CD8-positive, alpha-beta memory T cell (primary cell): ENCODE measurements at regions of chr11 and their contacts with region 1.

Region 1: DNA sequence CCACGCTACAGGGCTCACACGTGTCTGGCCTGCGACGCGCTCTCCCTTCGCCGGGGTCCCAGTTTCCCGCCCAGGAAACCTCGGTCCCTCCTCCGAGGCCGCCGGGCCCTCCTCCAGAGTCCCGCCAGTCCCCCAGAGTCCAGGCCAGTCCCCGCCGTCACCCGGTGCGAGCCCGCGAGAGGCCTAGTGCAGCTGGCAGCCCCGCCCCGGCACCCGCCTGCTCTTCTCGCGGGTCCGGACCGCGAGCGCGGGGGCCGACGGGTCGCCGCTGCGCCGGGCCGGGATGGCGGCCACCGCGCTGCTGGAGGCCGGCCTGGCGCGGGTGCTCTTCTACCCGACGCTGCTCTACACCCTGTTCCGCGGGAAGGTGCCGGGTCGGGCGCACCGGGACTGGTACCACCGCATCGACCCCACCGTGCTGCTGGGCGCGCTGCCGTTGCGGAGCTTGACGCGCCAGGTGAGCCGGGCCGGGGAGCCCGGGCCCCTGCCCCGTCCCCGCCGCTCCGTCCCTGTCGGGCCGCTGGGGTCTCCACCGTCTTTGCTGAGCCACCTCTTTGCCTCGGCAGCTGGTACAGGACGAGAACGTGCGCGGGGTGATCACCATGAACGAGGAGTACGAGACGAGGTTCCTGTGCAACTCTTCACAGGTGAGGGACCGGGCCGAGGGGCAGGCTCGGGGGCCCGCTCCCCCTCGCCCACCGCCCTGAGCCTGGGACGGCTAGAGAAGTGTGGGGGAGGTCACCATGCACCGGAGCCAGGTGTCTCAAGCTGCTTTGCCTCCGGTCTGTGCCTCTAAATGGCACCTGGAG is at the start of gene PTPMT1:
- DNase-seq: peak; percentile 47 to 75 (median 57)
- H3K4me3 ChIP-seq: peak within 1 kb of the TSS; percentile 80
- H3K4me3 Mint-ChIP-seq: peak within 1 kb of the TSS; percentile 81 to 91 (median 82)
- H3K27ac ChIP-seq: peak within 1 kb of the TSS; percentile 72
- H3K27ac Mint-ChIP-seq: peak within 1 kb of the TSS; percentile 72 to 93 (median 86)
- H3K4me1 ChIP-seq: peaks cover 6% of the 10 kb centered on the region
- H3K4me1 Mint-ChIP-seq: peaks cover 14 to 32% (median 22%) of the 10 kb centered on the region in 3 donors
- H3K27me3 ChIP-seq: no peaks in the 10 kb centered on the region
- H3K27me3 Mint-ChIP-seq: no peaks in the 10 kb centered on the region
- total RNA-seq, gene PTPMT1: 53.3 to 53.8 TPM

Region 2: GRCh38 chr11:47552566-47553416 is 12.8 kb before region 1 on chr11 and contains the start of gene CELF1:
- CTCF ChIA-PET with region 1: interaction called, 18 read pairs
- POLR2A ChIA-PET with region 1: interaction called, 10 read pairs
- DNase-seq: peak; percentile 88 to 94 (median 91)
- H3K4me3 ChIP-seq: peak within 1 kb of the TSS; percentile 66
- H3K4me3 Mint-ChIP-seq: peak within 1 kb of the TSS; percentile 95 to 100 (median 97)
- H3K27ac ChIP-seq: peak within 1 kb of the TSS; percentile 59
- H3K27ac Mint-ChIP-seq: peak within 1 kb of the TSS; percentile 95 to 99 (median 98)
- H3K4me1 ChIP-seq: peaks cover 44% of the 10 kb centered on the region
- H3K4me1 Mint-ChIP-seq: peaks cover 40 to 55% (median 55%) of the 10 kb centered on the region in 3 donors
- H3K27me3 ChIP-seq: no peaks in the 10 kb centered on the region
- H3K27me3 Mint-ChIP-seq: no peaks in the 10 kb centered on the region
- total RNA-seq, gene CELF1: 160 to 168 TPM

Region 3: GRCh38 chr11:47578524-47579460 is 13.2 kb after region 1 on chr11 and contains the starts of genes KBTBD4 and NDUFS3:
- CTCF ChIA-PET with region 1: interaction called, 4 read pairs
- POLR2A ChIA-PET with region 1: interaction called, 19 read pairs
- DNase-seq: peak; percentile 78 to 92 (median 84)
- H3K4me3 ChIP-seq: peak within 1 kb of the TSS; percentile 89
- H3K4me3 Mint-ChIP-seq: peak within 1 kb of the TSS; percentile 96 to 100 (median 99)
- H3K27ac ChIP-seq: peak within 1 kb of the TSS; percentile 84
- H3K27ac Mint-ChIP-seq: peak within 1 kb of the TSS; percentile 92 to 100 (median 98)
- H3K4me1 ChIP-seq: peaks cover 34% of the 10 kb centered on the region
- H3K4me1 Mint-ChIP-seq: peaks cover 28 to 55% (median 34%) of the 10 kb centered on the region in 3 donors
- H3K27me3 ChIP-seq: no peaks in the 10 kb centered on the region
- H3K27me3 Mint-ChIP-seq: peaks cover 0 to 3% of the 10 kb centered on the region in 2 donors
- total RNA-seq, gene KBTBD4: 24.8 to 26.4 TPM
- total RNA-seq, gene NDUFS3: 147 to 157 TPM

Region 4: DNA sequence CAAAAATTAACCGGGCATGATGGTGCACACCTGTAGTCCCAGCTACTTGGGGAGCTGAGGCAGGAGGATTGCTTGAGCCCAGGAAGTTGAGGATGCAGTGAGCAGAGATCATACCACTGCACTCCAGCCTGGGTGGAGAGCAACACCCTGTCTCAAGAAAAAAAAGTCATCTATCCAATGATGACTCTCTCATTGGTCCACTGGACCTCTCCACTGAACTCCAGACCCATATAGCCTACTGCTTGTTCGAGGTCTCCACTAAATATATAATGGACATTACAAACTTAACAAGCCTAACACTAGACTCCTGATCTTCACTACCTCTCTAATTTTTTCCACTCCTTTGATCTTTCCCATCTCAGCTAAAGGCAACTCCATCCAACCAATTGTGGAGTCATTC is 110.3 kb after region 1 on chr11:
- CTCF ChIA-PET with region 1: no interaction called
- POLR2A ChIA-PET with region 1: no interaction called
- DNase-seq: no peak
- H3K4me3 ChIP-seq: no peak overlapping the region
- H3K4me3 Mint-ChIP-seq: no peak overlapping the region
- H3K27ac ChIP-seq: no peak overlapping the region
- H3K27ac Mint-ChIP-seq: peak overlapping the region in 2 of 8 donors; percentile 1 to 2
- H3K4me1 ChIP-seq: no peaks in the 10 kb centered on the region
- H3K4me1 Mint-ChIP-seq: no peaks in the 10 kb centered on the region
- H3K27me3 ChIP-seq: no peaks in the 10 kb centered on the region
- H3K27me3 Mint-ChIP-seq: no peaks in the 10 kb centered on the region

Region 5: GRCh38 chr11:48193876-48194275 is 628.3 kb after region 1 on chr11:
- CTCF ChIA-PET with region 1: no interaction called
- POLR2A ChIA-PET with region 1: interaction called, 11 read pairs
- DNase-seq: no peak
- H3K4me3 ChIP-seq: no peak overlapping the region
- H3K4me3 Mint-ChIP-seq: no peak overlapping the region
- H3K27ac ChIP-seq: no peak overlapping the region
- H3K27ac Mint-ChIP-seq: no peak overlapping the region
- H3K4me1 ChIP-seq: peaks cover 4% of the 10 kb centered on the region
- H3K4me1 Mint-ChIP-seq: peaks cover 24 to 29% (median 24%) of the 10 kb centered on the region in 3 donors
- H3K27me3 ChIP-seq: no peaks in the 10 kb centered on the region
- H3K27me3 Mint-ChIP-seq: peaks cover 5 to 33% of the 10 kb centered on the region in 2 donors